ENCODE measurements at regions of chr3 and their contacts with region 1.

Region 1: DNA sequence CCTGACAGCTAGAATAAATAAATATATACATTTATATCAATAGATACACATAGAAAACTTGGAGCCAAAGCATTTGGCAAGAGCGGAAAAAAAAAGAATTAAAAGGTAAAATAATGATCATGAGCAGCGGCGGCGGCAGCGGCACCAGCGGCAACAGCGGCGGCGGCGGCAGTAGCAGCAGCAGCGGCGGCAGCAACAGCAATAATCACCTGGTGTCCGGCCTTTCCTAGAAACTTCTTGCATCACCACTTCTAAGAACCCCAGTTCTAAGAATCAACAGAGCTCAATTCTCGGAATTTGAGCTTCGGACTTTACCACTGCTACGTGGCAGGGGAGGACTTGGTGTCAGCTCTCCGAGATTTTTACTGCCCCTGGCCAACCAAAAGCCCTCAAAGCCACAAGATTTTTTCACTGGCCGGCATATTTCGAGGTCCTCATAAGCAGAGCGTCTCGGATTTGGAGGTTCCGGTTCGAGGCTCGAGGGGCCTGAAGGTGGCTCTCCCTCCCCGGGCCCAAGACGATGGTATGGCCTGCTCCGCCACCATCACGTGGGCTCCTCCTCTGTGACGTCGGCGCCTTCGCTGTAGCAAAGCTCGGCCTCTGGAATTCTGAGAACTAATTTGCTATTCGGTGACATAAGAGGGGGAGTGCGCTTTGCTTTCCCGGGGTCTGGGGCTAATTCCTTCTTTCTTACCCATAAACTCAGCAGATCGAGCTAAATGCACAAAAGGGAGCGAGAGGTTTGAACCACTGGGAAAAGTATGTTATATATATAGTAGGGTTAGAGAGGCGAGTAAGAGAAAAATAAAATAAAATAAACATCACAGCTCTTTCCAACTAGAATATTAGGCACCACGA is at the start of gene BCL6:
- DNase-seq: peak; percentile 84 to 97 (median 94)
- ATAC-seq: peak; percentile 79
- H3K4me3 ChIP-seq: peak within 1 kb of the TSS; percentile 95
- H3K4me3 Mint-ChIP-seq: peak within 1 kb of the TSS; percentile 86 to 100 (median 98)
- H3K27ac ChIP-seq: peak within 1 kb of the TSS; percentile 96
- H3K27ac Mint-ChIP-seq: peak within 1 kb of the TSS; percentile 99 to 100 (median 100)
- H3K4me1 ChIP-seq: peaks cover 19 to 34% of the 10 kb centered on the region in 2 donors
- H3K4me1 Mint-ChIP-seq: peaks cover 30 to 77% (median 75%) of the 10 kb centered on the region in 7 donors
- H3K27me3 ChIP-seq: no peaks in the 10 kb centered on the region
- H3K27me3 Mint-ChIP-seq: peaks cover 0 to 16% (median 0%) of the 10 kb centered on the region in 5 donors
- total RNA-seq, gene BCL6: 13.4 to 154 (median 29.5) TPM

Region 2: GRCh38 chr3:187445356-187445755 is 300.1 kb before region 1 on chr3:
- CTCF ChIA-PET with region 1: no interaction called
- POLR2A ChIA-PET with region 1: no interaction called
- intact Hi-C with region 1: no loop called
- DNase-seq: no peak
- ATAC-seq: no peak
- H3K4me3 ChIP-seq: no peak overlapping the region
- H3K4me3 Mint-ChIP-seq: no peak overlapping the region
- H3K27ac ChIP-seq: no peak overlapping the region
- H3K27ac Mint-ChIP-seq: no peak overlapping the region
- H3K4me1 ChIP-seq: no peaks in the 10 kb centered on the region
- H3K4me1 Mint-ChIP-seq: no peaks in the 10 kb centered on the region
- H3K27me3 ChIP-seq: no peaks in the 10 kb centered on the region
- H3K27me3 Mint-ChIP-seq: peaks cover 0 to 11% (median 4%) of the 10 kb centered on the region in 5 donors

Region 3: GRCh38 chr3:187777331-187777941 is 32.0 kb after region 1 on chr3:
- CTCF ChIA-PET with region 1: interaction called, 6 read pairs
- POLR2A ChIA-PET with region 1: no interaction called
- intact Hi-C with region 1: loop called (anchors 1 to 2 kb)
- DNase-seq: peak in 5 of 9 donors; percentile 14 to 31 (median 18)
- ATAC-seq: peak; percentile 86
- H3K4me3 ChIP-seq: peak overlapping the region; percentile 2
- H3K4me3 Mint-ChIP-seq: peak overlapping the region in 5 of 10 donors; percentile 1 to 64 (median 37)
- H3K27ac ChIP-seq: no peak overlapping the region
- H3K27ac Mint-ChIP-seq: peak overlapping the region in 7 of 9 donors; percentile 6 to 88 (median 56)
- H3K4me1 ChIP-seq: peaks cover 10 to 16% of the 10 kb centered on the region in 2 donors
- H3K4me1 Mint-ChIP-seq: peaks cover 14 to 63% (median 23%) of the 10 kb centered on the region in 7 donors
- H3K27me3 ChIP-seq: no peaks in the 10 kb centered on the region
- H3K27me3 Mint-ChIP-seq: no peaks in the 10 kb centered on the region

Region 4: DNA sequence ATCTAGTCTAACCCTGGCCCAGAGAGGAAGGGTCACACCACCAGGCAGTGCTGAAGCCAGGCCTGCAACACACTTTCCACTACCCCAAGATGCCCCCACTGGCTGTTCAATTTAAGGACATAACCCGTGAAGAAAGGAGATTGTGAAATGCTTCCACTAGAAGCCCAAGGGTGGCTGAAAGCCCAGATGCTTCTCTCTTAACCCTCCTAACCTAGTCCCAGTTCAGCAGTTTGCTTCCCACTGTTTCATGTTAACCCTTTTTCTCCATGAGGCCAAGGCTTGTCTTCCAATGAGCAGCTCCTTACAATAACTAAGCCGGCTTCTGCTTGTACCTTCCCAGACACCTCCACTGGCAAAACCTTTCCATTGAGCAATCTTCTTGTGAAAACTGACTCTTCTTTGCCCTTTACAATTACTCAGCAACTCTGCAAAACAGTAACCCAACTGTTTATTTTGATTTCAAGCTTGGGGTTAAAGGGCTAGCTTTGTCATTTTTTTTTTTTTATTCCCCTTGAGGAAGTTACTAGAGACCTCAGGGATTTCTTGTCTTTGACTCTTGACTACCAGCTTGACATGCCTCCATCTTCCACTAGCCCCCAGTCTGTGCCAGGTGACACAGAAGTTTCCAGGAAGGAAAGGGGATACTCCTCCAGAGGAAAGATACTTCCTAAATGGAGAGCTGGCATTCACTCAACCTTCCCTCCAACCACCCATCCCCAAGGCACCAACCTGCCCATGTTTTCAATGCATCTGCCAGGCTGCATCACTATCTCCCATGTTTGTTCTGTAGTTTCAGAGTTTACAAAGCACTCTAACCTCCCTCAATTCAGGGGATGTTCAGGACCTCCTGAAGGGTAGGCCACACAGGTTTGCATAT is 209.9 kb after region 1 on chr3:
- CTCF ChIA-PET with region 1: interaction called, 7 read pairs
- POLR2A ChIA-PET with region 1: interaction called, 3 read pairs
- intact Hi-C with region 1: loop called in 1 of 2 experiments (anchors 5 kb)
- DNase-seq: no peak
- ATAC-seq: no peak
- H3K4me3 ChIP-seq: no peak overlapping the region
- H3K4me3 Mint-ChIP-seq: no peak overlapping the region
- H3K27ac ChIP-seq: no peak overlapping the region
- H3K27ac Mint-ChIP-seq: peak overlapping the region in 1 of 9 donors; percentile 5
- H3K4me1 ChIP-seq: peaks cover 15 to 18% of the 10 kb centered on the region in 2 donors
- H3K4me1 Mint-ChIP-seq: peaks cover 8 to 56% (median 29%) of the 10 kb centered on the region in 7 donors
- H3K27me3 ChIP-seq: no peaks in the 10 kb centered on the region
- H3K27me3 Mint-ChIP-seq: no peaks in the 10 kb centered on the region

Region 5: DNA sequence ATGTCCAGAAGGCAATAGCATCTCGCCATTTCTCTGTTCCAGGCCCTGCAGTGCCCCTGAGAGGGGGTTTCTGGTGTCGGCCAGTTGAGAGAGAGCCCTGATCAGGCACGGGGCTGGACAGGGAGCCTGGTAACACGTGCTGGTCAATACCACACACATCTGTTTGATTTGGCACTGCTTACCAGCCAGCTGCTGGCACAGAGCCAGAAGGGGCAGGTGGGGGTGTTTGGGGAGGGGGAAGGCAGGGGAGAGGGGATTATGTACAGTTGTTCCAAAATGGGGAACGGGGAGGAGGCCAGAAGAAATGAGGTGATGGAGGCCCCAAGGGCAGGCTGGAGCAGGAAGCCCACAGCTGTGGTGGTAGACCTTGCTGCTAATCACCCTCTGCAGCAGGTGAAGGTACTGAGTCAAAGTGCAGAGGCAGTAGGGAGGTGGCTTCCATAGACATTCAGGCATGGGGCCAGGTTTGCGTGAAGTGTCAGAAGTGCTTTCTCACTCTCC is 255.0 kb after region 1 on chr3:
- CTCF ChIA-PET with region 1: no interaction called
- POLR2A ChIA-PET with region 1: interaction called, 3 read pairs
- intact Hi-C with region 1: loop called in 1 of 2 experiments (anchors 1 kb)
- DNase-seq: no peak
- ATAC-seq: no peak
- H3K4me3 ChIP-seq: peak overlapping the region; percentile 13
- H3K4me3 Mint-ChIP-seq: peak overlapping the region; percentile 42 to 83 (median 77)
- H3K27ac ChIP-seq: no peak overlapping the region
- H3K27ac Mint-ChIP-seq: peak overlapping the region; percentile 27 to 94 (median 85)
- H3K4me1 ChIP-seq: peaks cover 26 to 37% of the 10 kb centered on the region in 2 donors
- H3K4me1 Mint-ChIP-seq: peaks cover 41 to 75% (median 64%) of the 10 kb centered on the region in 7 donors
- H3K27me3 ChIP-seq: no peaks in the 10 kb centered on the region
- H3K27me3 Mint-ChIP-seq: no peaks in the 10 kb centered on the region

Region 6: DNA sequence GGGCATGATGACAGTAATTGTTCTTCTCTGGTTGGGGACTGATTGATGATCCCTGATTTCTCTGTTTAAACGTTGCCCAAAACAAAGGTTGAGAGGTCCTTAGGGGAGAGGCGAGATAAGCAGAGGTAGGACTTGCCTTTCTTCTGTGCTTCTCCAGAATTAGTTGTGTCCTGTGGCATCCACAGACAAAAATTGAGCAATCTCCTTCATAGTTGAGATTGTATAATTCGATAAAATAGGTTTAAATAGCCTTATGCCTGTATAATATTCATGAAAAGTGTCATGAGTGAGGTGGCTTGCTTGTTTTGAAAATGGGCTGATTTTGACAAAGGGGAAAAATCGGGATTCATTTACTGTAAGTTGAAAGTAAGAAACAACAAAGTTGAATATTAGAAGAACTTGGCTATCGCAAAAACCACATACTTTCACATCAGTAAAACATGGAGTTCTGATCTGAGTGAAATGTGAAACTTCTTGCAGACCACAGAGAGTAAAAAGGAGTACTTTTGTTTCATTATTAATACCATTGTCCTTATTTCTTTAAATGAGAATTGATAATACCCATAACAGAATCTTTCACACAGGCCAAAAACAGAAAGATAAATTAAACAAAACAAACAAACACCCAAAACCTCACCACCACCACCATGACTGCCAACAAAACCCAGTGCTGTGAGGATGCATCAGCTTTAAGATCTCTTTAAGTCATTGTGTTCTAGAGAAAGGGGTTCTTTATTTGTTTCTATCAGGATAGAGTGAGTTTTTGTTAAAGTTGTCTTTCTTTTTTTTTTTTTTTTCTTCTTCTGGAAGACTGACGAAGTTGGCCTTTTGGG is 564.2 kb after region 1 on chr3:
- CTCF ChIA-PET with region 1: no interaction called
- POLR2A ChIA-PET with region 1: no interaction called
- intact Hi-C with region 1: loop called in 1 of 2 experiments (anchors 2 kb)
- DNase-seq: peak in 1 of 9 donors; percentile 42
- ATAC-seq: no peak
- H3K4me3 ChIP-seq: no peak overlapping the region
- H3K4me3 Mint-ChIP-seq: peak overlapping the region in 2 of 10 donors; percentile 3 to 75
- H3K27ac ChIP-seq: no peak overlapping the region
- H3K27ac Mint-ChIP-seq: peak overlapping the region in 4 of 9 donors; percentile 10 to 77 (median 44)
- H3K4me1 ChIP-seq: no peaks in the 10 kb centered on the region
- H3K4me1 Mint-ChIP-seq: peaks cover 9 to 25% (median 14%) of the 10 kb centered on the region in 7 donors
- H3K27me3 ChIP-seq: no peaks in the 10 kb centered on the region
- H3K27me3 Mint-ChIP-seq: peaks cover 0 to 10% (median 0%) of the 10 kb centered on the region in 5 donors

Region 7: GRCh38 chr3:188578576-188579363 is 833.3 kb after region 1 on chr3:
- CTCF ChIA-PET with region 1: no interaction called
- POLR2A ChIA-PET with region 1: no interaction called
- intact Hi-C with region 1: loop called (anchors 5 to 10 kb)
- DNase-seq: no peak
- ATAC-seq: no peak
- H3K4me3 ChIP-seq: no peak overlapping the region
- H3K4me3 Mint-ChIP-seq: no peak overlapping the region
- H3K27ac ChIP-seq: no peak overlapping the region
- H3K27ac Mint-ChIP-seq: no peak overlapping the region
- H3K4me1 ChIP-seq: no peaks in the 10 kb centered on the region
- H3K4me1 Mint-ChIP-seq: peaks cover 0 to 10% (median 0%) of the 10 kb centered on the region in 7 donors
- H3K27me3 ChIP-seq: no peaks in the 10 kb centered on the region
- H3K27me3 Mint-ChIP-seq: no peaks in the 10 kb centered on the region

Region 8: GRCh38 chr3:188701485-188701969 is 956.1 kb after region 1 on chr3:
- CTCF ChIA-PET with region 1: no interaction called
- POLR2A ChIA-PET with region 1: no interaction called
- intact Hi-C with region 1: no loop called
- DNase-seq: no peak
- ATAC-seq: peak; percentile 72
- H3K4me3 ChIP-seq: no peak overlapping the region
- H3K4me3 Mint-ChIP-seq: no peak overlapping the region
- H3K27ac ChIP-seq: no peak overlapping the region
- H3K27ac Mint-ChIP-seq: no peak overlapping the region
- H3K4me1 ChIP-seq: no peaks in the 10 kb centered on the region
- H3K4me1 Mint-ChIP-seq: peaks cover 0 to 8% (median under 1%) of the 10 kb centered on the region in 7 donors
- H3K27me3 ChIP-seq: no peaks in the 10 kb centered on the region
- H3K27me3 Mint-ChIP-seq: no peaks in the 10 kb centered on the region

Region 9: GRCh38 chr3:189324538-189325138 is 1579.2 kb after region 1 on chr3:
- CTCF ChIA-PET with region 1: no interaction called
- POLR2A ChIA-PET with region 1: no interaction called
- intact Hi-C with region 1: loop called in 1 of 2 experiments (anchors 1 kb)
- DNase-seq: peak; percentile 15 to 96 (median 94)
- ATAC-seq: peak; percentile 98
- H3K4me3 ChIP-seq: peak overlapping the region; percentile 21
- H3K4me3 Mint-ChIP-seq: peak overlapping the region; percentile 72 to 87 (median 82)
- H3K27ac ChIP-seq: peak overlapping the region; percentile 51
- H3K27ac Mint-ChIP-seq: peak overlapping the region; percentile 86 to 100 (median 94)
- H3K4me1 ChIP-seq: peaks cover 33 to 46% of the 10 kb centered on the region in 2 donors
- H3K4me1 Mint-ChIP-seq: peaks cover 27 to 80% (median 73%) of the 10 kb centered on the region in 7 donors
- H3K27me3 ChIP-seq: no peaks in the 10 kb centered on the region
- H3K27me3 Mint-ChIP-seq: peaks cover 0 to 4% (median 0%) of the 10 kb centered on the region in 5 donors

Measured in naive thymus-derived CD4-positive, alpha-beta T cell (primary cell).